Aorta (tissue), 5 donors: ENCODE measurements at regions of chr11 and their contacts with region 1.

Region 1: GRCh38 chr11:111299101-111300026 is 1.0 kb downstream of the POU2AF3 start:
- DNase-seq: peak; percentile 73 to 93
- ATAC-seq: peak; percentile 90
- H3K4me3 ChIP-seq: peak overlapping the region; percentile 28 to 60
- H3K27ac ChIP-seq: peak overlapping the region in 1 of 2 donors; percentile 19
- H3K4me1 ChIP-seq: peaks cover 0 to 3% of the 10 kb centered on the region in 2 donors
- H3K27me3 ChIP-seq: no peaks in the 10 kb centered on the region

Region 2: DNA sequence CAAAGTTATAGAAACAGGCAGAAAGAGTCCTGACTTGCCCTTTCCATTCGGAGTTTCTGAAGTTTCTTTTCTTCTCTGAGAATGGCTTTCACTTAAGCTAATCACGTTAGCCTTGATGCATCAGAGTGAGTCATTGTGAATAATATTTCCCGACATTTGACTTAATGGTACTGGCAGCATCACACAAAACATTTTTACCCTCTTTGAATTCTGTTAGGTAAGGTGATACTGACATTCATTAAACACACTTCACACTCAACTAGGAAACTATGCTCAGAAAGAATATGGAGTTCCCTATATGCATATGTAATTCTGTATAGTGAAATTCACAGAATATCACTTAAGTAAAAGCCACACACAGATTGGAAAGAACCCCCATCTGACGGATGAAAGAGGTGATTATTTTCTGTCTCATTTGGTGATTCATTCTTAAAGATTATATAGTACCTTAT is 466.3 kb before region 1 on chr11:
- intact Hi-C with region 1: no loop called
- DNase-seq: no peak
- ATAC-seq: no peak
- H3K4me3 ChIP-seq: no peak overlapping the region
- H3K27ac ChIP-seq: no peak overlapping the region
- H3K4me1 ChIP-seq: no peaks in the 10 kb centered on the region
- H3K27me3 ChIP-seq: no peaks in the 10 kb centered on the region

Region 3: GRCh38 chr11:111320728-111321568 is 21.6 kb after region 1 on chr11:
- intact Hi-C with region 1: loop called in 1 of 2 experiments (anchors 2 kb)
- DNase-seq: no peak
- ATAC-seq: no peak
- H3K4me3 ChIP-seq: no peak overlapping the region
- H3K27ac ChIP-seq: peak overlapping the region in 1 of 2 donors; percentile 39
- H3K4me1 ChIP-seq: peaks cover 2 to 4% of the 10 kb centered on the region in 2 donors
- H3K27me3 ChIP-seq: no peaks in the 10 kb centered on the region

Region 4: GRCh38 chr11:111334532-111335502 is 35.5 kb after region 1 on chr11:
- intact Hi-C with region 1: loop called in 1 of 2 experiments (anchors 5 kb)
- DNase-seq: no peak
- ATAC-seq: no peak
- H3K4me3 ChIP-seq: no peak overlapping the region
- H3K27ac ChIP-seq: peak overlapping the region in 1 of 2 donors; percentile 3
- H3K4me1 ChIP-seq: peaks cover 0 to 7% of the 10 kb centered on the region in 2 donors
- H3K27me3 ChIP-seq: no peaks in the 10 kb centered on the region

Region 5: DNA sequence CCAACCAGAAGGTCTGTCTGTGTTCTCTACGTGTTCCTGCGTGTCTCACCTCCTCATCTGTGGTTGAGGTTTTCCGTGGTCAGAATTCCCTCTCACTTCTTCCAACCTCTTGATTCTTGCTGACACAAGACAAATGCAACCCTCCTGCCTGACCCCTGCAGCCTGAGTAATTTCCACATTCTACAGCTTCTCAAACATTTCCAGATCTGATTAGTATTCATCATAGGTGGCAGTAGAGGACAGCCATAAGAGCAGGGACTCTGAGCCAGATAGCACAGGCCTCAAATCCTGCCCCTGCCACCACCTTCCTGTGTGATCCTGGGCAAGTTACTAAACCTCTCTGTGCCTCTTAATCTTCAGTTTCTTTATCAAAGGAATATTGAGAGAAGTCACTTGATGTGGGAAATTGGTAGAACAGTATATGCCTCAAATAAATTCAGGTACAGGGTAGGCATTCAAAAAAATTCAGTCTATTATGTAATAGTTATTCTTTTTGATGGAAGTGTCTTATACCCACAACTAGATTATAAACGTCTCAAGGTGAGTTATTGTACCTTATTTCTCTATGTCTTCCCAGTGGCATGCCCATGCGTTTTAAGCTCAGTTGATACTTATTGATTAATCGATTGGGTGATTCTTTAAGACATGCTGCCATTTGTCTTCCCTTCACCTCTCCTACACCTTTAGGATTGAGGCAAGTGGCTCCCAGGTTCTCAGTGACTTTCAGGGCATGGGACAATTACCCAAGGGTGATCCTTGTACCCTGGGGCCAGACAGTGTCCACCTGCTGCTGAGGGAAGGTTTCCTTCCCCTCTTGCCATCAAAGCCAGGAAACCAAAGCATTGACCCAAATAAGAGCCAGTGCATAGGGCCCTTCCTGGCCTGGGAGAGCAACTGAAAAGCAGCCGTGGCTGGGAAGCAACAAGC is 60.1 kb after region 1 on chr11:
- intact Hi-C with region 1: loop called in 1 of 2 experiments (anchors 10 kb)
- DNase-seq: no peak
- ATAC-seq: no peak
- H3K4me3 ChIP-seq: no peak overlapping the region
- H3K27ac ChIP-seq: no peak overlapping the region
- H3K4me1 ChIP-seq: no peaks in the 10 kb centered on the region
- H3K27me3 ChIP-seq: no peaks in the 10 kb centered on the region

Region 6: GRCh38 chr11:111422494-111423249 is 123.3 kb after region 1 on chr11:
- intact Hi-C with region 1: loop called (anchors 2 to 5 kb)
- DNase-seq: peak; percentile 53 to 84
- ATAC-seq: peak; percentile 67
- H3K4me3 ChIP-seq: no peak overlapping the region
- H3K27ac ChIP-seq: no peak overlapping the region
- H3K4me1 ChIP-seq: peaks cover 2 to 7% of the 10 kb centered on the region in 2 donors
- H3K27me3 ChIP-seq: no peaks in the 10 kb centered on the region